Dorsolateral prefrontal cortex (tissue), 120 donors: ENCODE measurements at regions of chr13 and their contacts with region 1.

Region 1: DNA sequence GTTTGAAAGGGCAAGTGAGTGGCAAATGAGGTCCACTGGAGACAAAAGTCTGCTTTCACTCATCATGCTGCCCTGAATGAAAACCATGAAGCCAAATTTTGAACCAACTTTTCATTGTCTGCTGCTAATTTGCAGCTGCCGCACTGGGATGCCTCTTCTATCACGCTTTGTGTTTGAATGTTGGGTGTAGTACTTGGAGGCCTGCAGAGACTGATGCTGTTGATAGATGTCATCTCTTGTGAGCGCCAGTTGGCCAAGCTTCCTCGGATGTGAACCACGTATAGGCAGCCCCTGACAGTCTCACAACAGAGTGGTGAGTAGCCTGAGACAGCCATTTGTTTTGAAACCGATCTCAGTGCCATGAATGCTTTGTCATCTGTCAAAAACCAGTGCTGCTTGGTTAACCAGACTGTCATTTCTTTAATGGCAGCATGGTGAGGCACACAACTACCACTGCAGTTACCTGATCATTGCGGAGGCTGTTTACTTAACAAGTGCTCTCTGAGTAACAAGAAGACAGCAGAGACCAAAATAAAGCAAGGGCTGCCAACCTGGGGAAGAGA is 31.2 kb upstream of the SLC10A2 start:
- DNase-seq: peak in 9 of 10 donors; percentile 42 to 89 (median 76)
- H3K4me3 ChIP-seq: no peak overlapping the region
- H3K27ac ChIP-seq: peak overlapping the region in 26 of 59 donors; percentile 4 to 75 (median 53)
- H3K27me3 ChIP-seq: no peaks in the 10 kb centered on the region
- CTCF ChIP-seq: peak in 7 of 56 donors; percentile 11 to 33 (median 23)

Region 2: DNA sequence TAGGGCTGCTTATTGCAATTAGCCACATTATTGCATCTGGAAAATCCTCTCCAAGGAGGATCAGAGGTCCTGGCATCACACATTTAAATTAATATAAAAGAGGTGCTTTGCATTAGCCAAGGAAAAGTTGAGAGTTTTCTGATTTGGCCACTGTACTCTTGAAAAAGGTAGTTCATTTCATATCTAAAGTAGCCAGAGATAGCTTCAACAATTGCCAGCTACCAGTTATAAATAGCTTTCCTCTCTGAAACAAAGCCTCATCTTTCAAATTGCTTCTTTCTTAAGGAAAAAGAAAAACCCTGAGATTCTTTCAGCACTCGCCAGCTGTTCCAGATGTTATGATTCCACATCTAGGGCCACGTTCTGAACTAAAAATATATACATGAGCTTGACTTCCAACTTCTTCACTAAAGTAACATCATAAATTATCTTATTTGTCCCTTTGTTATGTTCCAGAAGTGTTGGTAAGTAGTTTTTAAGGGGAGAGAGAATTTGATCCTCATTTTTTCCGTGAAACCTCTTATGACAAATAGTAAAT is 182.0 kb before region 1 on chr13:
- intact Hi-C with region 1: no loop called
- DNase-seq: no peak
- H3K4me3 ChIP-seq: no peak overlapping the region
- H3K27ac ChIP-seq: no peak overlapping the region
- H3K27me3 ChIP-seq: no peaks in the 10 kb centered on the region
- CTCF ChIP-seq: no peak

Region 3: DNA sequence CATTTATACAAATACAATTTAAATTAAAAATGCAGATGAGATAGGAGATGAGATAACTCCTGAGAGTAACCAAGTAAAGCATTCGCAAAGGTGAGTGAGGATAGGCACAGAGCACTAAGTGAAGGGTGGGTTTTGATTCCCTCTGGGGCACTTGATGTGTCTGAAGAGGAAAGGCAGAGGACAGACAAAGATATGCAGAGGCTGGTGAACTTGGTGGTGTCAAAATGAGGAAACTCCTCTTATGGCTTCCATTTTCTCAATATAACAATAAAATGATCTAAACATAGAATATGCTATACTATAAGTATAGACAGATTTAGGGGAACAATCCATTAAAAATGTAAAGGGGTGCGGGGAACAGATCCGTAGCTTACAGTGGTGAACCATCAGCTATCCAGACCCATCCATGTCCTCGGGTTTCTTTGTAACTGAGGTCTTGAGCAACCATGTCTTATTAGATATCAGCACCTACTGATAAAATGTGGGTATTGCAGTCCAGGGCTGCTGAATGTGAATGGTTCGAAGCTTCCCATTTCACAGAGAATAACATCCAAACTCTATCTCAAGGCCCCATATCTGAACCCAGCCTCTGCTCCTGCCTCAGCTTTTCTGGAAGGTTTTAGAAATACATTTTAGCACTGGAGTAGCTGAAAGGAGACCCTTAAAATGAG is 42.7 kb after region 1 on chr13:
- intact Hi-C with region 1: loop called in 1 of 2 experiments (anchors 5 kb)
- DNase-seq: no peak
- H3K4me3 ChIP-seq: no peak overlapping the region
- H3K27ac ChIP-seq: no peak overlapping the region
- H3K27me3 ChIP-seq: peaks cover 0 to 11% (median 0%) of the 10 kb centered on the region in 45 donors
- CTCF ChIP-seq: peak in 53 of 56 donors; percentile 16 to 70 (median 48)

Region 4: GRCh38 chr13:103203735-103204330 is 106.4 kb after region 1 on chr13:
- intact Hi-C with region 1: no loop called
- DNase-seq: no peak
- H3K4me3 ChIP-seq: no peak overlapping the region
- H3K27ac ChIP-seq: peak overlapping the region in 1 of 59 donors; percentile 61
- H3K27me3 ChIP-seq: peaks cover 0 to 5% (median 0%) of the 10 kb centered on the region in 45 donors
- CTCF ChIP-seq: no peak